PC-9 (cell line): ENCODE measurements at regions of chr14 and their contacts with region 1.

Region 1: GRCh38 chr14:92456215-92457015 is 57.2 kb upstream of the RIN3 start:
- DNase-seq: peak; percentile 35 to 70
- H3K4me3 ChIP-seq: no peak overlapping the region
- H3K27ac ChIP-seq: no peak overlapping the region
- H3K4me1 ChIP-seq: no peaks in the 10 kb centered on the region
- H3K27me3 ChIP-seq: no peaks in the 10 kb centered on the region
- CTCF ChIP-seq: peak; percentile 84

Region 2: GRCh38 chr14:92135267-92135666 is 321.1 kb before region 1 on chr14:
- CTCF ChIA-PET with region 1: no interaction called
- POLR2A ChIA-PET with region 1: no interaction called
- intact Hi-C with region 1: loop called (anchors 10 kb)
- DNase-seq: no peak
- H3K4me3 ChIP-seq: no peak overlapping the region
- H3K27ac ChIP-seq: no peak overlapping the region
- H3K4me1 ChIP-seq: no peaks in the 10 kb centered on the region
- H3K27me3 ChIP-seq: no peaks in the 10 kb centered on the region
- CTCF ChIP-seq: peak; percentile 73

Region 3: GRCh38 chr14:92690171-92691036 is 234.0 kb after region 1 on chr14:
- CTCF ChIA-PET with region 1: no interaction called
- POLR2A ChIA-PET with region 1: no interaction called
- intact Hi-C with region 1: loop called (anchors 5 kb)
- DNase-seq: peak; percentile 39 to 43
- H3K4me3 ChIP-seq: no peak overlapping the region
- H3K27ac ChIP-seq: no peak overlapping the region
- H3K4me1 ChIP-seq: no peaks in the 10 kb centered on the region
- H3K27me3 ChIP-seq: no peaks in the 10 kb centered on the region
- CTCF ChIP-seq: peak; percentile 77